Esophagus muscularis mucosa (tissue), 4 donors: ENCODE measurements at regions of chr13 and their contacts with region 1.

Region 1: DNA sequence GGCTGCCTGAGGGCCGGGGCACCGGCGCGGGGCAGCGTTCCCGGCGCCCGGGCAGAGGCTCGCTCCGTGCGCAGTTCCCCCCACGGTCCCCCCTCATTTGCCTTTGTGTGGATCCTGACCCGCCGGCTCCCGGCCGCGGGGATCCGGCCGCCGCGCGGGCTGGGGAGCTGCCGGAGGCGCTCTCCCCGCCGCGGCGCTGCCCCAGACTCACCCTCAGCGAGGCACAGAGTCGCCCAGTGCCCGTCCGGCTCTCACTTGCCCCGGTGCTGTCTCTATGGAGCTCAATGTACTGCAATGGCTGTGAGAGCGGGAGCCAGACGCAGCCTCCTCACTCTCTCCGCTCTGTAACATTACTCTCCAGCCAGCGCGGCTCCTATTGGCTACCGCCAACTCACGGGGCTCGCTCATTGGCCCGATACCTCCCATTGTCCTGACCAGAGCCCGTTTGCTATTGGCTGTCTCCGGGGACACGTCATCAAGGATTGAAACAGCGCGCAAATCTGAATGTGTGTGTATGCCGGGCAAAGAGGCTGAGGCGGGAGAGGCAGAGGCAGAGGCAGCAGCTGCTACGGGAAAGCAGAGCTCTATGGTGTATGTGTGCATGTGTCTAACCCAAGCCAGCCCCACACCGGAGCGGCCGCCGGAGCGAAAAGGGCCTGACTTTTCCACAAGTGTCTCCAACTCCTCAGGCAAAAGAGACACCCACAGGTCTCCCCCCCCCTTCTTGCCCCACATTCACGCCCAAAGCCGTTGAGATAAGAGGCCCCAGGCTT is at the start of gene HMGB1:
- DNase-seq: peak; percentile 100
- H3K4me3 ChIP-seq: peak within 1 kb of the TSS; percentile 79 to 98 (median 96)
- H3K27ac ChIP-seq: peak within 1 kb of the TSS; percentile 98 to 100 (median 99)
- H3K4me1 ChIP-seq: peaks cover 27 to 34% (median 33%) of the 10 kb centered on the region in 4 donors
- H3K27me3 ChIP-seq: no peaks in the 10 kb centered on the region
- CTCF ChIP-seq: no peak
- EP300 ChIP-seq: no peak
- POLR2A ChIP-seq: peak; percentile 91
- total RNA-seq, gene HMGB1: 169 to 229 (median 218) TPM

Region 2: GRCh38 chr13:30132623-30133553 is 332.9 kb before region 1 on chr13:
- intact Hi-C with region 1: loop called (anchors 2 kb)
- DNase-seq: peak; percentile 99
- H3K4me3 ChIP-seq: peak overlapping the region in 2 of 4 donors; percentile 14 to 27
- H3K27ac ChIP-seq: no peak overlapping the region
- H3K4me1 ChIP-seq: peaks cover 6 to 22% (median 17%) of the 10 kb centered on the region in 4 donors
- H3K27me3 ChIP-seq: no peaks in the 10 kb centered on the region
- CTCF ChIP-seq: peak; percentile 94 to 95 (median 95)
- EP300 ChIP-seq: no peak
- POLR2A ChIP-seq: no peak

Region 3: GRCh38 chr13:30422054-30422839 is 43.5 kb before region 1 on chr13 and contains the start of gene UBE2L5:
- intact Hi-C with region 1: loop called (anchors 5 kb)
- DNase-seq: peak; percentile 95
- H3K4me3 ChIP-seq: peak within 1 kb of the TSS; percentile 60 to 74 (median 65)
- H3K27ac ChIP-seq: peak within 1 kb of the TSS; percentile 91 to 97 (median 93)
- H3K4me1 ChIP-seq: peaks cover 5 to 39% (median 22%) of the 10 kb centered on the region in 4 donors
- H3K27me3 ChIP-seq: no peaks in the 10 kb centered on the region
- CTCF ChIP-seq: no peak
- EP300 ChIP-seq: no peak
- POLR2A ChIP-seq: no peak
- total RNA-seq, gene UBE2L5: 0.39 TPM in 1 of 4 donors, not detected in the others

Region 4: GRCh38 chr13:30673669-30674521 is 208.1 kb after region 1 on chr13:
- intact Hi-C with region 1: loop called (anchors 10 kb)
- DNase-seq: peak; percentile 96
- H3K4me3 ChIP-seq: peak overlapping the region; percentile 56 to 64 (median 62)
- H3K27ac ChIP-seq: peak overlapping the region; percentile 83 to 87 (median 84)
- H3K4me1 ChIP-seq: peaks cover 0 to 14% (median 11%) of the 10 kb centered on the region in 4 donors
- H3K27me3 ChIP-seq: no peaks in the 10 kb centered on the region
- CTCF ChIP-seq: peak; percentile 65 to 84 (median 72)
- EP300 ChIP-seq: no peak
- POLR2A ChIP-seq: no peak

Region 5: GRCh38 chr13:30865123-30866049 is 399.6 kb after region 1 on chr13:
- intact Hi-C with region 1: loop called (anchors 10 kb)
- DNase-seq: no peak
- H3K4me3 ChIP-seq: peak overlapping the region in 2 of 4 donors; percentile 4 to 18
- H3K27ac ChIP-seq: peak overlapping the region; percentile 84 to 90 (median 89)
- H3K4me1 ChIP-seq: peaks cover 33 to 62% (median 60%) of the 10 kb centered on the region in 4 donors
- H3K27me3 ChIP-seq: no peaks in the 10 kb centered on the region
- CTCF ChIP-seq: peak; percentile 92 to 95 (median 95)
- EP300 ChIP-seq: no peak
- POLR2A ChIP-seq: no peak